PC-9 (cell line): ENCODE measurements at regions of chr5 and their contacts with region 1.

Region 1: GRCh38 chr5:112174959-112175594 is 244.0 kb downstream of the EPB41L4A start:
- DNase-seq: peak; percentile 20 to 51
- H3K4me3 ChIP-seq: no peak overlapping the region
- H3K27ac ChIP-seq: no peak overlapping the region
- H3K4me1 ChIP-seq: peaks cover 4% of the 10 kb centered on the region; the same call in 1 of the 2 replicates
- H3K27me3 ChIP-seq: no peaks in the 10 kb centered on the region
- CTCF ChIP-seq: peak; percentile 83

Region 2: GRCh38 chr5:111143910-111144309 is 1031.2 kb before region 1 on chr5:
- CTCF ChIA-PET with region 1: no interaction called
- POLR2A ChIA-PET with region 1: no interaction called
- intact Hi-C with region 1: no loop called
- DNase-seq: no peak
- H3K4me3 ChIP-seq: no peak overlapping the region
- H3K27ac ChIP-seq: no peak overlapping the region
- H3K4me1 ChIP-seq: no peaks in the 10 kb centered on the region
- H3K27me3 ChIP-seq: no peaks in the 10 kb centered on the region
- CTCF ChIP-seq: no peak

Region 3: DNA sequence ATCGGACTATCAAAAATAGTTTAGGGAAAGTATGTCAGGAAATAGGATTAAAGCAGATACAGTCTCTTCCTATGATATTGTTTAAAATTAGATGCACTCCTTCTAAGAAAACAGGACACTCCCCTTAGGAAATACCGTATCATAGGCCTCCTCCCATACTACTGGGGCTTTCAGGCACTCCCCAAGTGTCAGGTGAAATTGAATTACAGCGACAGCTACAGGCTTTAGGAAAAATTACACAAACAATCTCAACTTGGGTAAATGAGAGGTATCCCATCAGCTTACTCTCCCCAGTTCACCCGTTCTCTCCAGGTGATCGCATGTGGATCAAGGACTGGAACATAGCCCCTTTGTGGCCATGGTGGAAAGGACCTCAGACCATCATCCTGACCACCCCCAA is 354.4 kb after region 1 on chr5:
- CTCF ChIA-PET with region 1: no interaction called
- POLR2A ChIA-PET with region 1: no interaction called
- intact Hi-C with region 1: loop called (anchors 5 kb)
- DNase-seq: no peak
- H3K4me3 ChIP-seq: no peak overlapping the region
- H3K27ac ChIP-seq: no peak overlapping the region
- H3K4me1 ChIP-seq: no peaks in the 10 kb centered on the region
- H3K27me3 ChIP-seq: no peaks in the 10 kb centered on the region
- CTCF ChIP-seq: 0 out of 2 replicates have a peak, but pooled peaks have one; percentile 29

Region 4: GRCh38 chr5:112604732-112605630 is 429.9 kb after region 1 on chr5:
- CTCF ChIA-PET with region 1: no interaction called
- POLR2A ChIA-PET with region 1: no interaction called
- intact Hi-C with region 1: loop called (anchors 10 kb)
- DNase-seq: no peak
- H3K4me3 ChIP-seq: no peak overlapping the region
- H3K27ac ChIP-seq: no peak overlapping the region
- H3K4me1 ChIP-seq: no peaks in the 10 kb centered on the region
- H3K27me3 ChIP-seq: no peaks in the 10 kb centered on the region
- CTCF ChIP-seq: no peak

Region 5: DNA sequence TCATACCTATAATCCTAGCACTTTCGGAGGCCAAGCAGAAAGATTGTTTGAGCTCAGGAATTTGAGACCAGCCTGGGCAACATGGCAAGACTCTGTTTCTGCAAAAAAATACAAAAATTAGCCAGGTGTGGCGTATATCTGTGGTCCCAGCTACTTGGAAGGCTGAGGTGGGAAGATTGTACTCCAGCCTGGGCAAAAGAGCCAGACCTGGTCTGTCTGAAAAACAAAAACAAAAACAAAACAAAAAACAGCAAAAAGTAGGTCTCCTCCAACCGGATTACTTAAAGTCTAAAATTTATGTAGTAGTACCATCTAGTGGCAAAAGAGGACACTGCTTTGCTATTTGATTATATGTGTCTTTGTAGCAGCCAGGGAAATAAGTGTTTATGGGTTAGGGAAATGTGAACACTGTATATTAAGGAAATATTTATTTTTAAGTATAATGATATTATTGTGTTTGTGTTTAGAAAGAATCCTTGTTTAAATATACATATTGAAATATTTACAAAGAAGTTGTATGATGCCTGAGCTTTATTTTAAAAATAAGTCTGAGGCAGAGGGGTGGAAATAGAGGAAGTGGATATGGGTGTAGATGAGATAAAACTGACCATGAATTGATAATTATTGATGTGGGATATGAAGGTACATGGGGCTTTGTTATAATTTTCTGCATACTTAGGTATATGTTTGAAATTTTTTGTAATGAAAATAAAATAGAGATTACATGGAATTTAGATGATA is 582.6 kb after region 1 on chr5:
- CTCF ChIA-PET with region 1: no interaction called
- POLR2A ChIA-PET with region 1: no interaction called
- intact Hi-C with region 1: loop called (anchors 2 kb)
- DNase-seq: peak; percentile 1 to 54
- H3K4me3 ChIP-seq: no peak overlapping the region
- H3K27ac ChIP-seq: no peak overlapping the region
- H3K4me1 ChIP-seq: no peaks in the 10 kb centered on the region
- H3K27me3 ChIP-seq: no peaks in the 10 kb centered on the region
- CTCF ChIP-seq: peak; percentile 85